ENCODE measurements at regions of chr19 and their contacts with region 1.

Region 1: GRCh38 chr19:5215431-5215830 is 125.2 kb downstream of the PTPRS start:
- DNase-seq: no peak
- ATAC-seq: no peak
- H3K4me3 ChIP-seq: no peak overlapping the region
- H3K4me3 Mint-ChIP-seq: no peak overlapping the region
- H3K27ac ChIP-seq: no peak overlapping the region
- H3K27ac Mint-ChIP-seq: no peak overlapping the region
- H3K4me1 ChIP-seq: peaks cover 0 to 8% of the 10 kb centered on the region in 2 experiments
- H3K4me1 Mint-ChIP-seq: peaks cover 0 to 3% (median 0%) of the 10 kb centered on the region in 3 donors
- H3K27me3 ChIP-seq: peaks cover 0 to 10% of the 10 kb centered on the region in 2 experiments
- H3K27me3 Mint-ChIP-seq: peaks cover 0 to 8% of the 10 kb centered on the region in 2 donors

Region 2: GRCh38 chr19:6654347-6655310 is 1439.2 kb after region 1 on chr19:
- CTCF ChIA-PET with region 1: no interaction called
- POLR2A ChIA-PET with region 1: interaction called in 1 of 2 experiments, 13 read pairs
- DNase-seq: peak in 19 of 35 experiments; percentile 21 to 68 (median 29)
- ATAC-seq: peak; percentile 62 to 79 (median 76)
- H3K4me3 ChIP-seq: peak overlapping the region in 1 of 2 donors; percentile 36
- H3K4me3 Mint-ChIP-seq: peak overlapping the region; percentile 67 to 82 (median 75)
- H3K27ac ChIP-seq: peak overlapping the region; percentile 82
- H3K27ac Mint-ChIP-seq: peak overlapping the region; percentile 95 to 96
- H3K4me1 ChIP-seq: peaks cover 11 to 43% of the 10 kb centered on the region in 2 experiments
- H3K4me1 Mint-ChIP-seq: peaks cover 25 to 46% (median 29%) of the 10 kb centered on the region in 3 donors
- H3K27me3 ChIP-seq: no peaks in the 10 kb centered on the region
- H3K27me3 Mint-ChIP-seq: no peaks in the 10 kb centered on the region